Transverse colon (tissue), 4 donors: ENCODE measurements at regions of chr1 and their contacts with region 1.

Region 1: GRCh38 chr1:114224196-114224907 is 70.7 kb upstream of the SYT6 start:
- DNase-seq: no peak
- H3K4me3 ChIP-seq: no peak overlapping the region
- H3K27ac ChIP-seq: no peak overlapping the region
- H3K4me1 ChIP-seq: peaks cover 0 to 4% (median 0%) of the 10 kb centered on the region in 4 donors
- H3K27me3 ChIP-seq: no peaks in the 10 kb centered on the region
- CTCF ChIP-seq: no peak
- EP300 ChIP-seq: no peak
- POLR2A ChIP-seq: no peak

Region 2: DNA sequence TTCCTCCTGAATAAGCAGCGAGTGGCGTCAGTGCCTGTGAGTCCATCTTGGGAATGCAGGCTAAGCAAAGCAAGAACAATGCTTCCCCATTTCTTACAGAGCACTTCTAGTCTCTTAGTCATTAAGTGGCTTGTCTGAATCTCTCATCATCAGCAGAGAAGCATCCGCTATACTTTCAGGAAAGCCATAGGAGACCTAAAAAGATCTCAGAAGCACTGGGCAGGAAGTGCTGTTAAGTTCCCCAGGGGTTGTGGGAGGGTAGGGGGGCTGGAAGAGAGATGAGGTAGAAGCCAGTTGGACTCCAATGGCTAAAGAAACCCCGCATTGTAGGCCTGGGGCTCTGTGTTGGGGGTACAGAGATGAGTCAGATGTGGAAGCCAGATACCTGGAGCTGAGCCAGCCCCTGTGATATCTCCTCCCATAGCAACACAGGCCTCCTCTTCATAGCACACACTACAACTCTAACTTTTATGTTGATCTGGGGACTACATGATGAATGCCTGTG is 115.5 kb before region 1 on chr1:
- in situ Hi-C with region 1: no loop called
- intact Hi-C with region 1: loop called (anchors 10 kb)
- DNase-seq: no peak
- H3K4me3 ChIP-seq: no peak overlapping the region
- H3K27ac ChIP-seq: no peak overlapping the region
- H3K4me1 ChIP-seq: no peaks in the 10 kb centered on the region
- H3K27me3 ChIP-seq: no peaks in the 10 kb centered on the region
- CTCF ChIP-seq: no peak
- EP300 ChIP-seq: no peak
- POLR2A ChIP-seq: no peak